Activated T-helper 1 cell treated with anti-CD3 and anti-CD28 coated beads, Interleukin-12 subunit alpha, Interleukin-12 subunit beta, Interleukin-2, Interleukin-4 antibody, amounts not matched to agents 30 ng/mL and 10 ng/mL and 1 ng/mL, durations not matched to agents 14 hours and 24 hours and 36 hours (primary cell): ENCODE measurements at regions of chr7 and their contacts with region 1.

Region 1: DNA sequence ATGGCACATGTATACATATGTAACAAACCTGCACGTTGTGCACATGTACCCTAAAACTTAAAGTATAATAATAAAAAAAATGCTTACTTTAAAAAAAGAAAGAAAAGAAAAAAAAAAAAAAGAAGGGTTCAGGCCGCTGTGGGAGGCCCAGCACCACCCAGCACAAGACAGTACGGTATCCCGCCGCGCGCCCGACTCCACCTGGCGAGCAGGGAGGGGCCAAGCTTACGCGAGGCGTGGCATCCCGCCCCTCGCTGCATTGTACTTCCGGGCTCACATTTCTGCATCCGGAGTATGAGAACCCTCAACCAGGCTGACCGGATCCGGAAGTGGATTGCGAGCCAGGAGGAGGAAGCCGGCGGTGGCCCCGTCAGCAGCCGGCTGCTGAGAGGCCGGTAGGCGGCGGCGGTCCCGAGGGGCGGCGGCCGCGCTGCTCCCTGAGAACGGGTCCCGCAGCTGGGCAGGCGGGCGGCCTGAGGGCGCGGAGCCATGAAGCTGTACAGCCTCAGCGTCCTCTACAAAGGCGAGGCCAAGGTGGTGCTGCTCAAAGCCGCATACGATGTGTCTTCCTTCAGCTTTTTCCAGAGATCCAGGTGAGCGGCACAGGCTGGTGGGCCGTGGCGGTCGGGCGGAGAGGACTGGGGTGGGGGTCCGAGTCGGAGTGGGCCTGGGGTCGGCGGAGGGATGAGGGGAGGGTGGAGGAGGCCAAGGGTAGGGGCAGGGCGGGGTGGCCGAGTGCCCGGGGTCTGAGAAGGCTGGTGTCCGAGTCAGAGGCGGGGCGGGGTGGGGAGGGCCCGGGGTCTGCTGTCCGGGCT is at the start of gene YKT6:
- DNase-seq: peak; percentile 94
- H3K4me3 Mint-ChIP-seq: peak within 1 kb of the TSS; percentile 88
- H3K27ac Mint-ChIP-seq: peak within 1 kb of the TSS; percentile 52
- H3K4me1 Mint-ChIP-seq: peaks cover 37% of the 10 kb centered on the region
- H3K27me3 Mint-ChIP-seq: no peaks in the 10 kb centered on the region
- total RNA-seq, gene YKT6: 91.8 and 92.1 TPM in 2 replicates

Region 2: DNA sequence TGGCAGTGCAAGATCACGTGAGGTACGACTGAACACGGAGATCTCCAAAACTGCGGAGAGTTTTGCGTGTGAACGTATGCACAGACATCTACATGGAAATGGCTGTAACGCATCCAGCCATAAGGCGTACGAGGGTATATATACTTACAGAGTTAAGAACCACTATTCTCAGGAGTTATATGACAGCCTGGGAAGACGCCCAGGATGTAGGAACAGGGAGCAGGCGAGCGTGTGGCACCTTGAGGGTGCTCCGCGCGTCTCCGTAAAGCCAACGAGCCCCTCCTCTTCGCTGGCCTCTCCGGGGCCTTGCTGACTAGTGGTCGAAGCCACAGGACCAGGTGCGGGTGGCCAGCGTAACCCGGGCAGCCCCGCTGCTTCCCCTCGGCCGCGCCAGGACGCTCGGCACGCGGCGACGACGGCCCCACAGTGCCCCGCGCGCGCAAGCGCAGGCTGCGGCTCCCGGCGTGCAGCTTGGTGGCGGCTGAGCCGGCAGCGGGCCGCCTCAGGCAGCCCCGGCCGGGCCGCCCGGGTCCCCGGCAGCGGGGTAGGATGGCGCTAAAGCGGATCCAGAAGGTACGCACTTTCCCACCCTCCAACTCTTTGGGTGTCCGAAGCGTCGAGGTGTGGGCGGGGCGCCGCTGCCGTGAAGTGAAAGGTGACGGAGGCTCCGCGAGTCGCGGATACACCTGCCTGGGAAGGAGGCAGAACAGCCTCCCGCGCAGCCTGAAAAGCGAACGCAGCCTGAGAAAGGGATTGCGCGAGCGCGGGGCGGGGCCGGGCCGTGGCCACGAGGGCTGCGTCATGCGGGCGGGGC is 274.7 kb before region 1 on chr7 and contains the start of gene UBE2D4:
- intact Hi-C with region 1: loop called (anchors 1 kb)
- DNase-seq: peak; percentile 88
- H3K4me3 Mint-ChIP-seq: peak within 1 kb of the TSS; percentile 95
- H3K27ac Mint-ChIP-seq: peak within 1 kb of the TSS; percentile 97
- H3K4me1 Mint-ChIP-seq: peaks cover 30% of the 10 kb centered on the region
- H3K27me3 Mint-ChIP-seq: peaks cover 2% of the 10 kb centered on the region
- total RNA-seq, gene UBE2D4: 15.3 and 17.7 TPM in 2 replicates

Region 3: DNA sequence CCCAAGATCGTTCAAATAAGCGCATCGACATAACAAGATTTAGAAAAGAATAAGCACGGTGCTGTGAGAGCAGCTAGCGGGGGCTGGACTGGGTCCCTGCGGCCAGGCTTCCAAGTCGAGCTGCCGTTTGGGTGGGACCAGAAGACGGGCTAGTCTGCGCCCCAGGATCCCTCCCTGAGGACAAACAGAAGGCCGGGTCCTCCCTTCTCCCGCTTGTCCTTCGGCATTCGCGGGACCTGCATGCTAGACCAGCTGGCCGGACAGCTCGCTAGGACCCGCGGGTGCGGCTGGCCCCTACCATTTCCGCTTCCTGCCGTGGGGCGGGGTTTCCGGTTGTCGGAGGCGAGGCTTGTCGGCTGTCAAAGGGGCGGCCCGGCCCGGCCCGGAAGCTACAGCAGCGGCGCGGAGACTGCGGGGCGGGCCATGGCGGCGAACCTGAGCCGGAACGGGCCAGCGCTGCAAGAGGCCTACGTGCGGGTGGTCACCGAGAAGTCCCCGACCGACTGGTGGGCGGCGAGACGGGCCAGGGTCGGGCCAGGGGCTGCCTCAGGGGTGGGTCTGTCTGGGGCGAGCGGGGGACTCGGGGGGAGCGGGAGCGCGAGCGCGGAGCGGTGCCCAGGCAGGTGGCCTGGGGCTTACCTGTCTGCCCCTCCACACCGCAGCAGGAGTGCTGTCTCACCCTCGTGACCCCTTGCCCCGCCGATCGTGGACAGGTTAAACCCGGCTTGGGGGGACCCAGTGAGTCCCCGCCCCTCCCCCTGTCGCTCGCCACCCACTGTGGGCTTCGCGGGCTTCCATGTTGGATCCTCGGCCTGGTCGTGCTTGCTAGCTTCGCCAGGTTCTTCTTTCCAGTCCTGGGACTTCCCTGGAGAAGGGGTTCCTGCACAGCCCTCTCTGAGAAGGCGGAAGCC is 156.3 kb before region 1 on chr7 and contains the start of gene DBNL:
- intact Hi-C with region 1: loop called (anchors 2 kb)
- DNase-seq: peak; percentile 92
- H3K4me3 Mint-ChIP-seq: peak within 1 kb of the TSS; percentile 92
- H3K27ac Mint-ChIP-seq: peak within 1 kb of the TSS; percentile 87
- H3K4me1 Mint-ChIP-seq: peaks cover 44% of the 10 kb centered on the region
- H3K27me3 Mint-ChIP-seq: no peaks in the 10 kb centered on the region
- total RNA-seq, gene DBNL: 140 TPM in 2 replicates

Region 4: GRCh38 chr7:44072364-44073231 is 128.3 kb before region 1 on chr7:
- intact Hi-C with region 1: loop called (anchors 1 kb)
- DNase-seq: no peak
- H3K4me3 Mint-ChIP-seq: no peak overlapping the region
- H3K27ac Mint-ChIP-seq: no peak overlapping the region
- H3K4me1 Mint-ChIP-seq: peaks cover 3% of the 10 kb centered on the region
- H3K27me3 Mint-ChIP-seq: no peaks in the 10 kb centered on the region

Region 5: DNA sequence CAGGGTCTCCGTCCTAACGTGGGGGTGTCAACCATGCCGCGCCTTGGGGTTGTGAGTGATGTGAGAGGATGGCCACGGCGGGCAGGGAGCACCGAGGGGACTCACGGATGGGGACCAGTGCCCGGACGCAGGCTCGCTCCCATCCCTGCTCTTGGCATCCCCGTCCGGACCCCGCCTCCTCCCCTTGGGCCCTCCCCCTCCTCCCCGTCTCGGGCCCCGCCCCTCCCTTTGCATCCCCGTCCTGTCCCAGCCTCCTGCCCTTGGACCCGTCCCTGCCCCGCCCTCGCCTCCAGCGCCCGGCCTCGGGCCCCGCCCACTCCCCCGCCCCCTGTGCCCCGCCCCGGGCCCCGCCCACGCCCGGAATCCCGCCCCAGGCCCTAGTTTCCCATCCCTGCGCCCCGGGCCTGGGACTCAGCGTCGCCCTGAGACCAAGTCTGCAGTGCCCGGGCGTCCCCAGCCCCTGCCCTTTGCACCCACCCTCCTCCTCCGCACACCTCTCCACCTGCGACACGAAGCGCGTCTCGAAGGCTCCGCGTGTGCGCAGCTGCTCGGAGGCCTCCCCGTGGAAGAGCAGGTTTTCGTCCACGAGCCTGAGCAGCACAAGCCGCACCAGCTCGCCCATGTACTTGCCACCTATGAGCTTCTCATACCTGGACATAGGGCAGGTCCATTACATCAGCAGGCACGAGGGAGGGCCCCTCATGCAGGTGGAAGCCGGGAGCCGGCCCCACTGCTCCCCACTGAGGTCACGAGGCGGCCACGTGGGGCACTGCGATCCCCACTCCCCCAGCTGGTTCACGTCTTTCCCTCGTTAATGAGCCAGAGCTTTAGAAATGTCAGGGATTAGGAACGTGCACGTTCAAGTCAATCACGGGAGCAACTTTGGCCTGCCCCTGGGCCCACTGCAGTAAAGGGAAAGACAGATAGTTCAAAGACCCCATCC is 54.6 kb before region 1 on chr7:
- intact Hi-C with region 1: loop called (anchors 1 kb)
- DNase-seq: peak; percentile 70
- H3K4me3 Mint-ChIP-seq: peak overlapping the region; percentile 80
- H3K27ac Mint-ChIP-seq: no peak overlapping the region
- H3K4me1 Mint-ChIP-seq: peaks cover 6% of the 10 kb centered on the region
- H3K27me3 Mint-ChIP-seq: peaks cover 6% of the 10 kb centered on the region

Region 6: DNA sequence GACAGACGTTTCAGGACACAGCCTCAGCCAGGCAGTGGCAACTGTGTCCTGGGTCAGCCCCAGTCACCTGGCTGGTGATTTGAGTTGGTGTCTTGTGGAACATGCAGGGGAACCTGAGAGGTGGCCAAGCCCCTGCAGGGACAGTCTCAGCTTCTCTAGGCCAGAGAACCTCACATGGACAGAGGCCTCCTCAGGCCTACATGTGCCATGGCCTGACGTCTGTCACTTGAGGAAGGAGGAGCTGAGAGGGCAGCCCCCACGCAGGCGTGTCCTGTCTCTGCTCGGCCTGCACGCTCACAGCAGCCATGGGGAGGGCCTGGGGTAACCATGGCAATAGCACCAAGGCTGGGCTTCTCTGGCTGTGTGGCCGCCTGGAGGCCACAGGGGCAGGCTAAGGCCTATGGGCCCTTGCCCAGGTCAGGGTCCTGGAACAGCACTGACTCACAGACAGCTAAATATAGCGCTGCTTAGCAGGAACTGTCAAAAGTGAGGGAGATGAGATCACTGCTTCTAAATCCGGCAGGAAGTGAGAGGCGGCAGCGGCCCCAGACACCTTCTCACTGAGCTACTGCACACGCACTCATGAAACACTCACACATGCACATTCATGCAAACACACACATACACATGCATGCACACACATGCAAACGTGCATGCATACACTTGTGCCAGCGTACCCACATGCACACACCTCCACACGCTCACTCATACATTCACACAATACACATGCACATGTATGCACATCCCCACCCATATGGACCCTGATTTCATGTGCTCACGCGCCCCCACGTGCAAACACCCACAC is 57.0 kb after region 1 on chr7:
- intact Hi-C with region 1: loop called (anchors 1 kb)
- DNase-seq: peak; percentile 69
- H3K4me3 Mint-ChIP-seq: peak overlapping the region; percentile 56
- H3K27ac Mint-ChIP-seq: peak overlapping the region; percentile 78
- H3K4me1 Mint-ChIP-seq: peaks cover 34% of the 10 kb centered on the region
- H3K27me3 Mint-ChIP-seq: no peaks in the 10 kb centered on the region

Region 7: GRCh38 chr7:44490351-44491200 is 289.7 kb after region 1 on chr7 and contains the start of gene NUDCD3:
- intact Hi-C with region 1: loop called (anchors 1 kb)
- DNase-seq: peak; percentile 73
- H3K4me3 Mint-ChIP-seq: peak within 1 kb of the TSS; percentile 88
- H3K27ac Mint-ChIP-seq: peak within 1 kb of the TSS; percentile 93
- H3K4me1 Mint-ChIP-seq: peaks cover 44% of the 10 kb centered on the region
- H3K27me3 Mint-ChIP-seq: no peaks in the 10 kb centered on the region
- total RNA-seq, gene NUDCD3: 77.9 and 83.1 TPM in 2 replicates